GM13977 (cell line): ENCODE measurements at regions of chr21 and their contacts with region 1.

Region 1: DNA sequence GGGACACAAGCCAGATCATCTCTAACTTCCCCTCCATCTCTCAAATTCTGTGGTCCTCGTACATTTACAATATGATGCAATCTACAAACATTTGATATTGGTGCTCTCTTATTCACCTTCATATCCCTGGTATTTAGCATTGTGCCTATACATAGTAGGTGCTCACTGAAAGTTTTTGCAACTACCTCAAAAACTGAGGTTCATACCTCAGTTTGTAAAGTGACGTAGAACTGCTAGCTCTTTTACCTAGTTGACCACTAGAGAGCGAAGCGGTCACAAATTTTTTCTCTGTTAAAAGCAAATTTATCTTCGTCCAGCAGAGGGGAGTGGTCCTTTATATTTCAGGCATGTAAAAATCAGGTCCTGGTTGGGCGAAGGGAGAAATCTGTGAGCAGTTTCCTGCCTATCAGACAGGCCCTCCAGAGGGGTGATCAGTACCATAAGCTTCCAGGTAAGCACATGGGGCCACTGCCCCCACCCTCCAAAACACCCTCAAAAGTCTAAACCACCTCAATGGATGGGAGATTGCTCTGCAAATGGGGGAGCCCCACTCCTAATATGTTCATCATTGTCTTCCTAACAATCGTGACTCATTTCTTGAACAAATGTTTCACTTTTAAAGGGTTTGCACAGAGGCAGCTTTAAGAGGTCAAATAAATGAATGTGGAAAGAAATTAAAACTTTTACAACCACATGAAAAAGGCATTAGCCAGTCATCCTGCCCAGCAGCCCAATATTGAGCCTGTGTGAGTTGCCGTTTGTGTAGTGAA is 10.6 kb upstream of the HLCS start:
- DNase-seq: peak; percentile 62
- CTCF ChIP-seq: peak; percentile 71

Region 2: DNA sequence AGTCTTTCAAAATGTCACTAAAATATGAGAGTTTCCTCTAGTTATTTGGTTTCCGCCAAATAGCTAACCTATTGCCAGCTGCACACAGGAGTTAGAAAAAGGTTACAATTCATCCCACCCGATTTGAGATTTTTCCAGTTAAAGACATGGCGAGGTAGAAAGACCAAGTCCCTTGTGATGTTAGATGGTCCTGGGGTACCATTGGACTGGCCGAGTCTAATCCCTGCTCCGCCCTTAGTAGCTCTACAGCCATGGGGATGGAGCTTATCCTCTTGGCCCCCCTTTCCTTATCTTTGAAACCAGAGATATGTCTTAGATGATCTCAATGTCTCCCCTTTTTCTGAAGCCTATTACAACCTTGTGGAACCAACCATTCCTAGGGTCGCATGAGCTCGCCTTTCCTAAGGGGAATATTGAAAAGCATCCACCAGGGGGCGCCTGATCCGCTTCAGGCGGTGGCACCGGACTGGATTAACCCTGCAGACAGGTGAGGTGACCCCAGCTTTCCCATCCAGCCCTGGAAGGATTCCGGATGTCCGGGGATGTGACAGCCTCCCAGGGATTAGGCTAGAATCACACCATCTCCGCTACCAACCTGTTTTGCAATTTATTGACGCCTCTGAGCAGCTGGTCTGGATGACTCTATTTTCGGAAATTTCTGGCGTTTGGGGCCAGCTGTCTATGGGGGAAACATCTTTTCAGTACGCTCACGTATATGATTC is 346.4 kb before region 1 on chr21:
- in situ Hi-C with region 1: no loop called
- DNase-seq: peak; percentile 69
- CTCF ChIP-seq: peak; percentile 84

Region 3: GRCh38 chr21:37032877-37033471 is 55.9 kb after region 1 on chr21:
- in situ Hi-C with region 1: loop called (anchors 10 kb)
- DNase-seq: no peak
- CTCF ChIP-seq: no peak

Region 4: GRCh38 chr21:38075831-38076587 is 1098.9 kb after region 1 on chr21:
- in situ Hi-C with region 1: no loop called
- DNase-seq: no peak
- CTCF ChIP-seq: no peak